T-cell (primary cell): ENCODE measurements at regions of chr17 and their contacts with region 1.

Region 1: GRCh38 chr17:59829217-59830006 is 63.3 kb downstream of the TUBD1 start:
- DNase-seq: peak in 2 of 35 experiments; percentile 29 to 74
- ATAC-seq: peak; percentile 70 to 78 (median 74)
- H3K4me3 ChIP-seq: peak overlapping the region in 1 of 2 donors; percentile 8
- H3K4me3 Mint-ChIP-seq: peak overlapping the region; percentile 39 to 60 (median 56)
- H3K27ac ChIP-seq: peak overlapping the region; percentile 64
- H3K27ac Mint-ChIP-seq: peak overlapping the region; percentile 91 to 94
- H3K4me1 ChIP-seq: peaks cover 0 to 38% of the 10 kb centered on the region in 2 experiments
- H3K4me1 Mint-ChIP-seq: peaks cover 42 to 79% (median 69%) of the 10 kb centered on the region in 3 donors
- H3K27me3 ChIP-seq: no peaks in the 10 kb centered on the region
- H3K27me3 Mint-ChIP-seq: no peaks in the 10 kb centered on the region

Region 2: GRCh38 chr17:59745040-59745439 is 84.4 kb before region 1 on chr17:
- CTCF ChIA-PET with region 1: interaction called in 1 of 2 experiments, 5 read pairs
- POLR2A ChIA-PET with region 1: interaction called in 1 of 2 experiments, 11 read pairs
- DNase-seq: no peak
- ATAC-seq: no peak
- H3K4me3 ChIP-seq: no peak overlapping the region
- H3K4me3 Mint-ChIP-seq: no peak overlapping the region
- H3K27ac ChIP-seq: no peak overlapping the region
- H3K27ac Mint-ChIP-seq: no peak overlapping the region
- H3K4me1 ChIP-seq: no peaks in the 10 kb centered on the region
- H3K4me1 Mint-ChIP-seq: peaks cover 0 to 4% (median 0%) of the 10 kb centered on the region in 3 donors
- H3K27me3 ChIP-seq: no peaks in the 10 kb centered on the region
- H3K27me3 Mint-ChIP-seq: no peaks in the 10 kb centered on the region

Region 3: DNA sequence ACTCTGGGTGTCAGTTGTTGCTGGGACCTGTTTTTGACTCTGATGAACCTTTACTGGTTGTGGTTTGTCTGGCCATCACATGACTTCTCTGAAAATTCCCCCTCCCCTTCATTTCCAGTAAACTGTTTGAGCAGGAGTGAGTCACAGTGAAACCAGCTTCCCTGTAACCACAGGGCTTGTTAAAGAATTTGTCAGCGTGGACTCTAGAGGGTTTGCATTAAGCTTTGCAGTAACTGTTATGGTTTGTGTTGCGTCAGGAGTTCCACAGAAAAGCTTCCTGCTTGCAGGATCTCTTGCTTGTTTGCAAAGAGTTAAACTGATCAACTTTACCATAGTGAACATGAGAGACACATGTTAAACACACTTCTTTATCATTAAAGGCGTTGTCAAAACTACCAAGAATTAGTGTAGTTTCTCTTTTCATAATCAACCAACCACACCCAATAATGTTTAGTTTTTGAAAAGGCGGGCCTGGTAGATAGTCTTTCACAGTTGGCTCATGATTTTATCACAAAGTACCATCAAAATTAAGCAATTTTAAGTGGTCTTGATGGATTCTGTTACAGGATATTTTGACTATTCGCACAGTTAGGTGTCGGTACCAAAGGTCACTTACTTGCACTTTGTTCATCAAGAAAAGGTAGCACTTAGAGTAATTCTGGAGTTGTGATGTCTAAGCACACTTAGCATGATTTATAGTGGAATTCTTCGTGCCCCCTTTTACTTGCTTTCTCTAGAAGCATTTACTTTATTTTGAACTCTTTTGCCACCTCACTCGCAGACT is 42.7 kb before region 1 on chr17:
- CTCF ChIA-PET with region 1: interaction called in 1 of 2 experiments, 12 read pairs
- POLR2A ChIA-PET with region 1: interaction called, 3 to 6 read pairs
- DNase-seq: peak; percentile 18 to 94 (median 69)
- ATAC-seq: peak; percentile 90 to 92 (median 90)
- H3K4me3 ChIP-seq: peak overlapping the region in 1 of 2 donors; percentile 37
- H3K4me3 Mint-ChIP-seq: peak overlapping the region; percentile 67 to 77 (median 75)
- H3K27ac ChIP-seq: peak overlapping the region; percentile 89
- H3K27ac Mint-ChIP-seq: peak overlapping the region; percentile 100
- H3K4me1 ChIP-seq: peaks cover 22 to 31% of the 10 kb centered on the region in 2 experiments
- H3K4me1 Mint-ChIP-seq: peaks cover 51 to 62% (median 61%) of the 10 kb centered on the region in 3 donors
- H3K27me3 ChIP-seq: no peaks in the 10 kb centered on the region
- H3K27me3 Mint-ChIP-seq: no peaks in the 10 kb centered on the region

Region 4: DNA sequence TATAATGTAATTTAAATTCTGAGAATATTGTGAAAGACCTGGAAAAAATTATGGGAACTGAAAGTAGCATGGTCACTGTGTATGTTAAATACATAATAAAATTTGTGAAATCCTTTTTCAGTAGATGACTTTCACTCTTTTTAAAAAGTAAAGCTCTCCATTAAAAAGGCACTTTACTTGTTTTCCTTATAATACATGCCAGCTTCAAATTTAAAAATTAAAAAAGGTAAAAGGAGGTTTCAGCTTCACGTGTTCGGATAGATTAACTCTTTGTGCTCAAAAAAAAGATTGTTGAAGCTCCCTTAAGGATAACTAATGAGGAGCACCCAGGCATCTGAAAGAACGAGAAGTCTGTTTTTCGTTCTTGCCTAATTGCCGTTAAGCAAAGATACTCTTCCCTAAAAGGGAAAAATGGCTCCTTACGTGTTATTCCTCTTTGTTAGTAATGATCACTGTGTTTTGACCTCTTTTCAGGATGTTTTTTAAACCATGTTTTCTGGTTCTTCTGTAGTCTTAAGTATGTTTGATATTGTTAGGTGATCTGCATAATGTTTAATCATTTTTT is 24.4 kb before region 1 on chr17:
- CTCF ChIA-PET with region 1: interaction called in 1 of 2 experiments, 11 read pairs
- POLR2A ChIA-PET with region 1: interaction called, 3 to 8 read pairs
- DNase-seq: no peak
- ATAC-seq: no peak
- H3K4me3 ChIP-seq: no peak overlapping the region
- H3K4me3 Mint-ChIP-seq: no peak overlapping the region
- H3K27ac ChIP-seq: no peak overlapping the region
- H3K27ac Mint-ChIP-seq: no peak overlapping the region
- H3K4me1 ChIP-seq: no peaks in the 10 kb centered on the region
- H3K4me1 Mint-ChIP-seq: peaks cover 0 to 7% (median 6%) of the 10 kb centered on the region in 3 donors
- H3K27me3 ChIP-seq: no peaks in the 10 kb centered on the region
- H3K27me3 Mint-ChIP-seq: no peaks in the 10 kb centered on the region

Region 5: DNA sequence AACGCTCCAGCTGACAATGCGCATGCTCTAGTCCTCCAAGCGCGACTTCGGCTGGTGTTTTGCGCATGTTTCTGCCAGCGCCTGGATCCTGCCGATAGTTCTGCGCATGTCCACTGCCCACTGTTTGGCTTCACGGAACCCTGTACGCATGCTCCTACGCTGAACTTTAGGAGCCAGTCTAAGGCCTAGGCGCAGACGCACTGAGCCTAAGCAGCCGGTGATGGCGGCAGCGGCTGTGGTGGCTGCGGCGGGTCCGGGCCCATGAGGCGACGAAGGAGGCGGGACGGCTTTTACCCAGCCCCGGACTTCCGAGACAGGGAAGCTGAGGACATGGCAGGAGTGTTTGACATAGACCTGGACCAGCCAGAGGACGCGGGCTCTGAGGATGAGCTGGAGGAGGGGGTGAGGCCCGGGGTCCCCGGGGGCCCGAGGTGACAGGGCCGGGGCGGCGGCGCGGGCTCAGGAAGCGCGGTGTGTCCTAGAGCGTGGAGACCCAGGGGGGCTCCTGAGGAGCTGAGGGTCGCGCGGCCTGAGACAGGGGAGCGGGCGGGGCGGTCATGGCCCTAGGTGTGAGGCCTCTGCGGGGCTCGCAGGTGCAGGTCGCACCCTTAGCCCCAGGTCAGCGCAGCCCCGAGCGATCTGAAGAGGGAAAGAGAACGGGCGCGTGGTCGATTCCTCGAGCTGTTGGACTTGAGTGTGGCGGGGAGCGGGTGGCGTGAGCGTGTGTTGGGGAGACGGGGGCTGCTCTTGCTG is 63.7 kb after region 1 on chr17 and contains the starts of genes RPS6KB1 and TUBD1:
- CTCF ChIA-PET with region 1: no interaction called
- POLR2A ChIA-PET with region 1: interaction called in 1 of 2 experiments, 12 read pairs
- DNase-seq: peak; percentile 89 to 100 (median 97)
- ATAC-seq: peak; percentile 94 to 95 (median 94)
- H3K4me3 ChIP-seq: peak within 1 kb of the TSS; percentile 95 to 99
- H3K4me3 Mint-ChIP-seq: peak within 1 kb of the TSS; percentile 99 to 100 (median 99)
- H3K27ac ChIP-seq: peak within 1 kb of the TSS; percentile 91
- H3K27ac Mint-ChIP-seq: peak within 1 kb of the TSS; percentile 99
- H3K4me1 ChIP-seq: peaks cover 15 to 35% of the 10 kb centered on the region in 2 experiments
- H3K4me1 Mint-ChIP-seq: peaks cover 65 to 66% (median 65%) of the 10 kb centered on the region in 3 donors
- H3K27me3 ChIP-seq: no peaks in the 10 kb centered on the region
- H3K27me3 Mint-ChIP-seq: no peaks in the 10 kb centered on the region
- total RNA-seq, gene RPS6KB1: 57.7 to 90.4 (median 61.7) TPM
- total RNA-seq, gene TUBD1: 16.6 to 27.9 (median 25.1) TPM